Activated CD8-positive, alpha-beta memory T cell treated with anti-CD3 and anti-CD28 coated beads, Interleukin-2, amount 10 ng/mL, durations not matched to agents 7 days and 5 days (primary cell): ENCODE measurements at regions of chr3 and their contacts with region 1.

Region 1: GRCh38 chr3:45043728-45044299 is 17.7 kb downstream of the CLEC3B start:
- DNase-seq: no peak
- ATAC-seq: no peak
- H3K4me3 Mint-ChIP-seq: no peak overlapping the region
- H3K27ac Mint-ChIP-seq: no peak overlapping the region
- H3K4me1 Mint-ChIP-seq: peaks cover 22% of the 10 kb centered on the region
- H3K27me3 Mint-ChIP-seq: peaks cover 30% of the 10 kb centered on the region

Region 2: DNA sequence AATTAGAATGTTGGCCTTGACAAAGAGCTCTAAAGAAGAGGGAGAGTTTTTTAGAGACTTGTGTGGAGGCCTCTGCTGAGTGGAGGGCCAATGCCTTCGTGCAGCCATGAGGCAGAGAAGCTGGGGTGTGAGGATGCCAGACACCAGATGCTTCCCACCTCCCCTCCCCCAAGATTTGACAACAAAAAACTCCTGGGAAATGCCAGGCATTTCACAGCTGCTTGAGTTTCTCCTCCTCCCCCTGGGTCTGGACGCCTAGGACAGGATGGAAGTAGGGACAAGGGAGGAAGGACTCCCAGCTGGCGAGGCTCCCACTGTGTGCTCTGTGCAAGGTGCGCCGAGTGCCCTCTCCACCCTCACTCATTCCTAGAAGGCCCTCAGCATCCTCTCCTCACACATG is 149.3 kb before region 1 on chr3:
- CTCF ChIA-PET with region 1: no interaction called
- DNase-seq: no peak
- ATAC-seq: no peak
- H3K4me3 Mint-ChIP-seq: no peak overlapping the region
- H3K27ac Mint-ChIP-seq: no peak overlapping the region
- H3K4me1 Mint-ChIP-seq: peaks cover 1% of the 10 kb centered on the region
- H3K27me3 Mint-ChIP-seq: no peaks in the 10 kb centered on the region

Region 3: GRCh38 chr3:45055411-45056143 is 11.8 kb after region 1 on chr3:
- CTCF ChIA-PET with region 1: interaction called, 71 read pairs
- DNase-seq: no peak
- ATAC-seq: no peak
- H3K4me3 Mint-ChIP-seq: no peak overlapping the region
- H3K27ac Mint-ChIP-seq: no peak overlapping the region
- H3K4me1 Mint-ChIP-seq: peaks cover 22% of the 10 kb centered on the region
- H3K27me3 Mint-ChIP-seq: peaks cover 2% of the 10 kb centered on the region

Region 4: DNA sequence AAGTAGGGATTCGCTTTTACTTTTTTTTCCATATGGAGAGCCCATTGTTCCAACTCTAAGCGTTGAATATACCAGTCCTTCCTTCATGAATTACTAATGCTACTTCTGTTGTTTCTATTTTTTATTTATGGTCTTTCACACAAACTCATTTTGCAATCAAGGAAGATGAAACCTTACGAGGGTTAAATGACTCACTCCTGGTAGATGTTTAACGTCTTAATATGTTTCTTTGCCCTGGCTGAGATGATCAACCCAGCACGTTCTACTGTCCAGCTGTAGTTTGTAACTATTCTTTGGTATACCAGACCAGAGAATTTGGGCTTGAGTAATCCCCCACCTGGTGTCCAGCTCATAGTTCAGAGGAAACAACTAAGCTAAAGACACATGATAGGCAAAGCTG is 79.2 kb after region 1 on chr3:
- CTCF ChIA-PET with region 1: interaction called, 10 read pairs
- DNase-seq: no peak
- ATAC-seq: no peak
- H3K4me3 Mint-ChIP-seq: no peak overlapping the region
- H3K27ac Mint-ChIP-seq: no peak overlapping the region
- H3K4me1 Mint-ChIP-seq: peaks cover 48% of the 10 kb centered on the region
- H3K27me3 Mint-ChIP-seq: peaks cover 32% of the 10 kb centered on the region

Region 5: DNA sequence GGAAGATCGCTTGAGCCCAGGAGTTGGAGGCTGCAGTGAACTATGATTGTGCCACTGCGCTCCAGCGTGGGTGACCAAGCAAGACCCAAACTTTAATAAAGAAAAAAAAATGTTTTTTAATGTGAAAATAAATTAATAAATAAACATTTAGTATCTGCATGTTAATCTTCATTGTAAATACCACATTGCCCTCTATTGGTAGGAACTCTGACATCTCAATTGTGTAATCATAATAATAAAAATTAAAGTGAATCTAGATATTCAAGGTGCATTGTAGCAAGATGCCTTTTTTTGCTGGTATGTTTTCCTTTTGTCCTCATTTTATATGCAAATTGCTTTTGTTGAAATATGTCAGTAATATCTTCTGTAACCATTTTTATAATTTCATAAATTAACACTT is 455.7 kb after region 1 on chr3:
- CTCF ChIA-PET with region 1: interaction called, 15 read pairs
- DNase-seq: no peak
- ATAC-seq: no peak
- H3K4me3 Mint-ChIP-seq: no peak overlapping the region
- H3K27ac Mint-ChIP-seq: no peak overlapping the region
- H3K4me1 Mint-ChIP-seq: peaks cover 5% of the 10 kb centered on the region
- H3K27me3 Mint-ChIP-seq: no peaks in the 10 kb centered on the region